Activated T-helper 2 cell treated with anti-CD3 and anti-CD28 coated beads, Interferon-gamma antibody, Interleukin-2, Interleukin-4, amounts not matched to agents 10 μg/mL and 5 μg/mL and 100 μg/mL, durations not matched to agents 14 hours and 24 hours and 36 hours (primary cell): ENCODE measurements at regions of chr6 and their contacts with region 1.

Region 1: GRCh38 chr6:33633462-33634158 is 12.5 kb downstream of the ITPR3 start:
- DNase-seq: peak; percentile 60
- H3K4me3 Mint-ChIP-seq: peak overlapping the region; percentile 82
- H3K27ac Mint-ChIP-seq: peak overlapping the region; percentile 64
- H3K4me1 Mint-ChIP-seq: peaks cover 42% of the 10 kb centered on the region
- H3K27me3 Mint-ChIP-seq: no peaks in the 10 kb centered on the region

Region 2: DNA sequence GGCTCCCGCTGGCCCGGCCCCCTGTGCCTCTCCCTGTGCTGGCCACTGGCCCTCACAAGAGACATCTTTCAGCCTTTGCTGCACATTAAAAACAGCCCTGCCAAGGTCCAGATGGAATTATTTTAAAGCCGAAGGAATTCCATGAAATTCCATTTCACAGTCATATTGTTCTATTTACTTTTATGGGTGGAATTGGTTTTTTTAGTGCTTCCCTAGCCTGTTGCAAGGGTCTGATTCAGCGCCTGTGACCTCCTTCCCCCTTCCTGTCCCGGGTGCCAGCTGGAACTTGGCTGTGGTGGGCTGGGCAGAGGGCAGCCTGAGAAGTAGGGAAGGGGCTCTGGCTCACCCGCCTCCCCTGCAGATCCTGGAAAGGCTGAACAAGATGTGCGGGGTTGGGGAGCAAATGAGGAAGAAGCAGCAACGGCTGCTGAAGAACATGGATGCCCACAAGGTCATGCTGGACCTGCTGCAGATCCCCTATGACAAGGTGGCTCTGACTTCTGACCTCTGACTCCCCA is 43.6 kb after region 1 on chr6:
- intact Hi-C with region 1: no loop called
- DNase-seq: no peak
- H3K4me3 Mint-ChIP-seq: no peak overlapping the region
- H3K27ac Mint-ChIP-seq: no peak overlapping the region
- H3K4me1 Mint-ChIP-seq: no peaks in the 10 kb centered on the region
- H3K27me3 Mint-ChIP-seq: no peaks in the 10 kb centered on the region

Region 3: GRCh38 chr6:33694401-33694931 is 60.9 kb after region 1 on chr6:
- intact Hi-C with region 1: loop called (anchors 5 kb)
- DNase-seq: peak; percentile 50
- H3K4me3 Mint-ChIP-seq: peak overlapping the region; percentile 51
- H3K27ac Mint-ChIP-seq: peak overlapping the region; percentile 91
- H3K4me1 Mint-ChIP-seq: peaks cover 62% of the 10 kb centered on the region
- H3K27me3 Mint-ChIP-seq: no peaks in the 10 kb centered on the region